A549 (cell line): ENCODE measurements at regions of chr10 and their contacts with region 1.

Region 1: GRCh38 chr10:88835096-88835909 is 16.3 kb downstream of the ANKRD22 start:
- DNase-seq: peak; percentile 62 to 87
- ATAC-seq: peak; percentile 98 to 99
- H3K4me3 ChIP-seq: no peak overlapping the region
- H3K27ac ChIP-seq: peak overlapping the region in 1 of 2 experiments; percentile 25; a peak in 1 of 6 replicates
- H3K4me1 ChIP-seq: peaks cover 13% of the 10 kb centered on the region
- CTCF ChIP-seq: peak; percentile 96
- EP300 ChIP-seq: no peak
- POLR2A ChIP-seq: no peak
- RAD21 ChIP-seq: peak; percentile 99

Region 2: GRCh38 chr10:88810196-88810961 is 24.9 kb before region 1 on chr10:
- CTCF ChIA-PET with region 1: interaction called, 15 read pairs
- POLR2A ChIA-PET with region 1: no interaction called
- DNase-seq: peak; percentile 31 to 79
- ATAC-seq: peak; percentile 91 to 94
- H3K4me3 ChIP-seq: no peak overlapping the region
- H3K27ac ChIP-seq: no peak overlapping the region
- H3K4me1 ChIP-seq: peaks cover 9% of the 10 kb centered on the region; the same call in 2 of the 3 replicates
- CTCF ChIP-seq: peak; percentile 81
- EP300 ChIP-seq: no peak
- POLR2A ChIP-seq: no peak
- RAD21 ChIP-seq: peak; percentile 71 to 74

Region 3: GRCh38 chr10:88858491-88858890 is 23.2 kb after region 1 on chr10:
- CTCF ChIA-PET with region 1: interaction called, 70 read pairs
- POLR2A ChIA-PET with region 1: no interaction called
- DNase-seq: no peak
- ATAC-seq: no peak
- H3K4me3 ChIP-seq: no peak overlapping the region
- H3K27ac ChIP-seq: no peak overlapping the region
- H3K4me1 ChIP-seq: peaks cover 5% of the 10 kb centered on the region; the same call in 1 of the 3 replicates
- CTCF ChIP-seq: no peak
- EP300 ChIP-seq: no peak
- POLR2A ChIP-seq: no peak
- RAD21 ChIP-seq: no peak

Region 4: DNA sequence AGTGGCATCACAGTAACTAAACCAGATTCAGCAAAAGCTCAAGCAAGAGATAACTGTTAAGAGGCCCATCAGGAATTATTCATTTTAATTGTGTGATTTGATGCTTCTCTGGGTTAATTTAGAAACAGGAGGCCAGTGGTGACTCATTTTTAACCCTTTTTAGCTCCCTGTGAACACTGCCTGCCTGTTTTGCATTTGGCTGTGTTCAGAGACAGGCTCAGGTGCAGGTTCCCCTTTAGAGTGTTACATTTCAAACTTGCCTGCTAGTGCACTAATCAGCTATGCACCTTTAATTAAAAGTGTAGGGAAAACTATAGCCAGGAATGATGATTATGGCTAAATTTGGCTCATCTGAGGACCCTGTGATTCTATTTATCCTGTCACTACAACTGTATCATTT is 51.3 kb after region 1 on chr10:
- CTCF ChIA-PET with region 1: interaction called, 58 read pairs
- POLR2A ChIA-PET with region 1: no interaction called
- DNase-seq: no peak
- ATAC-seq: no peak
- H3K4me3 ChIP-seq: no peak overlapping the region
- H3K27ac ChIP-seq: peak overlapping the region; percentile 35 to 62
- H3K4me1 ChIP-seq: peaks cover 86% of the 10 kb centered on the region
- CTCF ChIP-seq: no peak
- EP300 ChIP-seq: no peak
- POLR2A ChIP-seq: no peak
- RAD21 ChIP-seq: no peak

Region 5: DNA sequence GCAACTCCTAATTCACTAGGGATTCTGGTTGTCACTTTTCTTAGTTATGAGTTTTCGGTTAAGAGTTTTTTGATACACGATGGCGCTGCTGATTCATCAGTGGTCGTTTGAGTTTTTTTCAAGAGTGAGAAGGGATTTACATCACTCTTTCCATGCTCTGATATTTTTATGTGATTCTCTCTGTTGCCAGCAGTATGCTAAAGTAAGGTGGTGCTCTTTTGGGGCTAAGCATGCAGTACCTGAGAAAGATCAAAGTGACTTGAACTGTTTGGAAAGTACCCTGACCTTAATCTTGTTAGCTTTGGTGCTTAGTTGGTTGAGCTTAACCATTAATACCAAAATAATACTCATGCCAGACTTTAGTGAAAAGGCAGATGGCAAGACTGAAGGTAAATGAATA is 72.9 kb after region 1 on chr10:
- CTCF ChIA-PET with region 1: interaction called, 53 read pairs
- POLR2A ChIA-PET with region 1: no interaction called
- DNase-seq: no peak
- ATAC-seq: no peak
- H3K4me3 ChIP-seq: no peak overlapping the region
- H3K27ac ChIP-seq: no peak overlapping the region
- H3K4me1 ChIP-seq: no peaks in the 10 kb centered on the region
- CTCF ChIP-seq: no peak
- EP300 ChIP-seq: no peak
- POLR2A ChIP-seq: no peak
- RAD21 ChIP-seq: no peak

Region 6: GRCh38 chr10:88932539-88933256 is 97.4 kb after region 1 on chr10:
- CTCF ChIA-PET with region 1: interaction called, 397 read pairs
- POLR2A ChIA-PET with region 1: interaction called, 5 read pairs
- DNase-seq: peak; percentile 54 to 76
- ATAC-seq: peak; percentile 83 to 89
- H3K4me3 ChIP-seq: no peak overlapping the region
- H3K27ac ChIP-seq: peak overlapping the region; percentile 12 to 24; a peak in 2 of 6 replicates
- H3K4me1 ChIP-seq: peaks cover 8% of the 10 kb centered on the region
- CTCF ChIP-seq: peak; percentile 92
- EP300 ChIP-seq: no peak
- POLR2A ChIP-seq: no peak
- RAD21 ChIP-seq: peak; percentile 87 to 88

Region 7: GRCh38 chr10:89217057-89217990 is 382.0 kb after region 1 on chr10:
- CTCF ChIA-PET with region 1: interaction called, 12 read pairs
- POLR2A ChIA-PET with region 1: no interaction called
- DNase-seq: peak; percentile 24 to 58
- ATAC-seq: peak; percentile 69 to 74; a peak in 4 of 6 replicates
- H3K4me3 ChIP-seq: no peak overlapping the region
- H3K27ac ChIP-seq: no peak overlapping the region
- H3K4me1 ChIP-seq: peaks cover 6% of the 10 kb centered on the region; the same call in 2 of the 3 replicates
- CTCF ChIP-seq: peak; percentile 84
- EP300 ChIP-seq: no peak
- POLR2A ChIP-seq: no peak
- RAD21 ChIP-seq: peak; percentile 69 to 70

Region 8: GRCh38 chr10:89398003-89398749 is 562.9 kb after region 1 on chr10:
- CTCF ChIA-PET with region 1: no interaction called
- POLR2A ChIA-PET with region 1: no interaction called
- DNase-seq: peak in 1 of 2 experiments; percentile 15
- ATAC-seq: no peak; a peak in 2 of 6 replicates
- H3K4me3 ChIP-seq: no peak overlapping the region
- H3K27ac ChIP-seq: peak overlapping the region in 1 of 2 experiments; percentile 38; a peak in 3 of 6 replicates
- H3K4me1 ChIP-seq: peaks cover 19% of the 10 kb centered on the region
- CTCF ChIP-seq: no peak
- EP300 ChIP-seq: no peak
- POLR2A ChIP-seq: no peak
- RAD21 ChIP-seq: no peak